ENCODE measurements at regions of chr11 and their contacts with region 1.

Region 1: GRCh38 chr11:87097582-87097981 is 59.8 kb downstream of the TMEM135 start:
- DNase-seq: peak; percentile 52
- H3K4me3 ChIP-seq: no peak overlapping the region
- H3K27ac ChIP-seq: no peak overlapping the region
- H3K4me1 ChIP-seq: no peaks in the 10 kb centered on the region
- H3K27me3 ChIP-seq: no peaks in the 10 kb centered on the region
- CTCF ChIP-seq: peak; percentile 33 to 65
- POLR2A ChIP-seq: no peak

Region 2: GRCh38 chr11:87114093-87114492 is 16.5 kb after region 1 on chr11:
- CTCF ChIA-PET with region 1: interaction called, 10 read pairs
- POLR2A ChIA-PET with region 1: no interaction called
- dilution Hi-C with region 1: no loop called
- intact Hi-C with region 1: no loop called
- DNase-seq: no peak
- H3K4me3 ChIP-seq: no peak overlapping the region
- H3K27ac ChIP-seq: no peak overlapping the region
- H3K4me1 ChIP-seq: no peaks in the 10 kb centered on the region
- H3K27me3 ChIP-seq: no peaks in the 10 kb centered on the region
- CTCF ChIP-seq: no peak
- POLR2A ChIP-seq: no peak